PC-3 (cell line): ENCODE measurements at regions of chr11 and their contacts with region 1.

Region 1: DNA sequence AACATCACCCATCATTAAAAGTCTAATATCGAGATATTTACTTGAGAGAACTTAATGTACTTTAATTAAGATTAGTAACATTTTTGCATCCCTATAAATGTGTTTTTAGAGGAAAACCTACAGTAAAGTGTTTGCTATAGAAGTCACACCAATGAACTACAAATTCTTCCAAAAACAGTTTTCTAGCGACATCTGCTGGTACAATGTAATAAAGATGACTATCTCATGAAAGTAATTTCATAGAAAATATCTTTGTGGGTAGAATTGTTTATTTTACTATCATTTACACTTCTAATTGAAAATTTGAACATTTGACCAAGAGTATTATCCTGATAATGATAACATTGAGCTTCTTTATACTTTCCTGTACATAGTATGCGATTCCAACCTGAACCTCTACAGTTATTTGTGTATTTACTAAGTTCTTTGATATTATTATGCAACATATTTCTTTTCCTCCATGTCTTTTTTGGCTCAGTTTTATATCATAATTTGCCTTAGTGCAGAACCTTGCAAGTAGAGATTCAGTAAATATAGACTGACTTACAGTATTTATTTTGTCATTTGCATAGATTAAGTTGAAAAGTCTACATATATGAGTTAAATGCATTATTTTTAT is 252.7 kb downstream of the TMEM135 start:
- DNase-seq: peak; percentile 93
- ATAC-seq: peak; percentile 65
- H3K4me3 ChIP-seq: no peak overlapping the region
- H3K27ac ChIP-seq: no peak overlapping the region
- H3K4me1 ChIP-seq: no peaks in the 10 kb centered on the region
- H3K27me3 ChIP-seq: no peaks in the 10 kb centered on the region
- CTCF ChIP-seq: peak; percentile 92

Region 2: GRCh38 chr11:85854557-85855340 is 1435.7 kb before region 1 on chr11:
- CTCF ChIA-PET with region 1: no interaction called
- POLR2A ChIA-PET with region 1: no interaction called
- intact Hi-C with region 1: loop called (anchors 5 kb)
- DNase-seq: peak; percentile 99
- ATAC-seq: peak; percentile 94
- H3K4me3 ChIP-seq: peak overlapping the region; percentile 78
- H3K27ac ChIP-seq: peak overlapping the region; percentile 84
- H3K4me1 ChIP-seq: peaks cover 17% of the 10 kb centered on the region
- H3K27me3 ChIP-seq: no peaks in the 10 kb centered on the region
- CTCF ChIP-seq: peak; percentile 68

Region 3: GRCh38 chr11:86893235-86893634 is 397.2 kb before region 1 on chr11:
- CTCF ChIA-PET with region 1: interaction called, 11 read pairs
- POLR2A ChIA-PET with region 1: no interaction called
- intact Hi-C with region 1: no loop called
- DNase-seq: no peak
- ATAC-seq: no peak
- H3K4me3 ChIP-seq: no peak overlapping the region
- H3K27ac ChIP-seq: no peak overlapping the region
- H3K4me1 ChIP-seq: no peaks in the 10 kb centered on the region
- H3K27me3 ChIP-seq: no peaks in the 10 kb centered on the region
- CTCF ChIP-seq: no peak

Region 4: DNA sequence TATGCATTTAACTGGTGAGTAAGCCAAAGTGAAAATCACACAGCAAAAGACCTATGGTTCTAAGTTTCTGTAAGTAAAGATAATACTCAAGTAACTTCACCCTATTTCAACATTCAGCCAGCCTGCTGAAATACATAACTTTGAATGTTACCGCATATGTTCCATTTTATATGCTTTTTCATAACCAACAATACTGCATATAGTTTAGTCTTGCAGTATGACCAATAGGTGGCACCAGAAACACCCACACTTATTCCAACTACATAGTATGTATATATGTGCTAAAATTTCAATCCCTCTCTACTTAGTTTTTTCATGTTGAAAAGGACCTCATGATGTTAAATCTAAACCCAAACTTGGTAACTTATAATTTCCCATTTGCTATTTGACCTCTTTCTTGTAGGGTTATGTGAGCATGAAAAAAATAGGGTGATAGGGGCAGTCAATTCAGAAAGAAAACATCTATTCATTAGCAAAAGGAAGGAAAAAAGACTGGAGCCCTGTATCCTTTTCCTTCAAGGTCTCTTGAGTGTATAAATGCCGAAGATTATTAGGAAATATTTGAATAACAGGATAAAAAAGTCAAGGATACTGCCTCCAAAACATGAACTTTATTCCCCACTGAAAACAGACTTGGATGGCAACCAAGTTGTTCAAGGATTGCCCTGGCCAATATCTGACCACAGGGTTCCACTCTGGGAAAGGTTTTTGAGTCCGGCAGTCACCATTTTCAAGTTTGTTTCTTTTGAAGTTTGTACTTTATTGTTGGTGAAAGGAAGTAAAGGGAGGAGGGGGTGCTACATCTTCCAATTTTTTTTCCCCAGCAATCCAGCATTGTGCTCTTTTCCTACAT is 311.4 kb before region 1 on chr11:
- CTCF ChIA-PET with region 1: no interaction called
- POLR2A ChIA-PET with region 1: no interaction called
- intact Hi-C with region 1: loop called (anchors 2 kb)
- DNase-seq: peak; percentile 71
- ATAC-seq: peak; percentile 99
- H3K4me3 ChIP-seq: no peak overlapping the region
- H3K27ac ChIP-seq: no peak overlapping the region
- H3K4me1 ChIP-seq: peaks cover 4% of the 10 kb centered on the region; the same call in 1 of the 2 replicates
- H3K27me3 ChIP-seq: no peaks in the 10 kb centered on the region
- CTCF ChIP-seq: peak; percentile 95

Region 5: DNA sequence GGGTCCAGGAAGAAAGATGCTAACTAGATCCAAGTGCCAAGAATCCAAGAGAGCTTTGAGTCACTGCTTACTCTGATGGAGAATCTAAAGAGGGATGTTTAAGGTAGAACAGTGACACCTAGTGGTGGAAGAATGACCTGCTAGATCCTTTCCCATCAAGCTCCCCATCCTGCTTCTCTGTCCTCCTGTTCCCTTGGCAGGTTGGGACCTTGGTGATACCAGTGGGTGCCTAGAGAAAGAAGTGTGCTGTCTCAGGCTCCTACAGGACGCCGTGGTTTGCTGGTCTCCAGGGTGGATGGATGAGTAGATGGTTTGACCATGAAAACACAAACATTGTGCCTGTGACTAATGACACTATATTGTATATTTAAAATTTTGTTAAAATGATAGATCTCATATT is 131.0 kb after region 1 on chr11:
- CTCF ChIA-PET with region 1: no interaction called
- POLR2A ChIA-PET with region 1: no interaction called
- intact Hi-C with region 1: loop called (anchors 5 kb)
- DNase-seq: peak; percentile 97
- ATAC-seq: peak; percentile 57
- H3K4me3 ChIP-seq: no peak overlapping the region
- H3K27ac ChIP-seq: peak overlapping the region; percentile 93
- H3K4me1 ChIP-seq: peaks cover 65% of the 10 kb centered on the region
- H3K27me3 ChIP-seq: no peaks in the 10 kb centered on the region
- CTCF ChIP-seq: peak; percentile 89